Right ventricle myocardium inferior (tissue), 1 donor: ENCODE measurements at regions of chr19 and their contacts with region 1.

Region 1: DNA sequence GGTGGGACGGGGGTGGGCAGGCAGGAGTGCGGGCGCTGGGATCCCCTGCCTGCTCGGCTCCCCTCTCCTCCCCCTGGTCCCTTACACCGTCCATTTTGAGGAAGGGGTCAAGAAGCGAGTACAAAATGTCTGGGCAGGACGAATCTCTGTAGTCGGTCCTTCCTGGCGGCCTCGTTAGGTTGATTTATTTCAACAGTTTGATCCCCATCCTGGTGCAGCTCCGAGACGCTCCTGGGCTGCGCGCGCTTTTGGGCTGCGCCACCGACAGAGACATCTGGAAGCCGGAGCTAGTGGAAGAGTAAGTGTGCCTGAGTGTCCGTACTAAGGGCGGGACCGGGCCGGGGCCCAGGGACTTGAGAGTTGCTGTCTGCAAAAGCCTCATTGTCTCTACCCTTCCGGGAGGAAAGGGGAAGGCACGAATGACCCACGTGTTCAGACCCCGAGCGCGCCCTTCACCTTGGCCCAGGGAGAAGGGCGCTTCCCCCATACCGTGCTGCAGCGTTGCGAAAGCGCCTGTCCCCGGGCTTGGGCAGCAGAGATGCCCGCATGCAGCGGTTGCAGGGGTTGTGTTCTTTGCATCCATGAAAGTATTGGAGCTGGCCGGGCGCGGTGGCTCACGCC is 1.8 kb downstream of the ZNF114 start:
- DNase-seq: peak; percentile 76
- ATAC-seq: peak; percentile 79

Region 2: DNA sequence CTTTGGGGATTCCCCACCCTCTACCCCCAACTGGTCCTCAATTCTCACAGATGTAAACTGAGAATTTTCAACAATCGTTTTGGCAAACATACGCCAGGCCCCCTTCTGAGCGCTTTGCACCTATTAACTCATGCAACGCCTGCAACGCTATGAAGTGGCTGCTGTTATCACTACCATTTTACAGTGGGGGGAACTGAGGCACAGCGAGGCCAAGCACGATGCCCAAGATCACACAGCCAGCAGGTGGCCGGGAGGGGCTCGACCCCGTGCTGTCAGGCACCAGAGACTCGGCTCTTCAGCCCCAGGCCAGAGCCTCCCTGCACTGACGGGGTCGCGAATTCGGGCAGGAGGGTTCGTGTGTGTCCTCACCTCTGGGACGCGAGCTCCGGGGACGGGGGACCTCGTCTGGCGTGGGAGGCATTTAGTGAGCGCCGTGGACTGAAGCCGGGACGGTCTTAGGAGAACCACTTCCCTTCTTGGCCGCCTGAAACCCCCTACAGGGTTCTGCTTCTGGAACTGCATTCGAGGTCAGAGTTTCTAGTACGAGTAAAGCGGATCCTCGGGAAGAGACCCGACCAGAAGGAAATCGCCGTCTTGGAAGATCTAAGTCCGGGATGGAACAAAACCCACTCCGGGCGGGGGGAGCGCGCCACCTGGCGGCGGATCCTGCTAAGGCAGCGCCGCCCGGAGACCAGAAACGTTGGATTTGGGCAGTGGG is 19.3 kb after region 1 on chr19:
- intact Hi-C with region 1: loop called (anchors 1 kb)
- DNase-seq: peak; percentile 93
- ATAC-seq: peak; percentile 80

Region 3: GRCh38 chr19:48333467-48334384 is 62.1 kb after region 1 on chr19:
- intact Hi-C with region 1: loop called (anchors 5 kb)
- DNase-seq: peak; percentile 96
- ATAC-seq: peak; percentile 85

Region 4: GRCh38 chr19:48424694-48425219 is 153.1 kb after region 1 on chr19:
- intact Hi-C with region 1: no loop called
- DNase-seq: no peak
- ATAC-seq: no peak

Region 5: DNA sequence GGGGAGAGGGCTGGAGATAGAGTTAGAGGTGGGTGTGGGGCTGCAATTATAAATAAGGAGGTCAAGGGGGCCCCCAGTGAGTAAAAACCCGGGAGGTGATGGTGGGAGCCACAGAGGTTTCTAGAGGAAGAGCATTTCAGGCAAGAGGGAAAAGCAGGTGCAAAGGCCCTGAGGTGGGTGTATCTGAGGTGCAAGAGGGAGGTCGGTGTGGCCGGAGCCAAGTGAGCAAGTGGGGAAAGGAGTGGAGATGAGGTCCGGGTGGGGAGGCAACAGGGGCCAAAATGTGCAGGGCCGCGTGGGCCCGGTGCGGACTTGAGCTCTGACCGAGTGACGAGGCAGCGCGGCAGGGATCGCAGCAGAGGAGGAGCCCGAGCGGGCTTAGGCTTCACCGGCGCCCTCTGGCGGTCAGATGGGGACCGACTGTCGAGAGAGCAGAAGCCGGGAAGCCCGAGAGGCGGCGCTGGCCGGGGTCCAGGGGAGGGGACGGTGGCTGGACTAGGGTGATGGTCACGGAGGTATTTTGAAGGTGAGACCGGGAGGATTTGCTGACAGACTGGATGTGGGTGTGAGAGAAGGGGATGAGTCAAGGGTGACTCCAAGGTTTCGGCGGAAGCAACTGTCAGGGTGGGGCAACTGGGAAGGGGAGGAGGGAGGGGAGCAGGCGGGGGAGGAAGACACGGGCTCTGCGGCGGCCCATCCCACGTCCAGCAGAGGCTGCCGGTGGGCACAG is 317.2 kb after region 1 on chr19:
- intact Hi-C with region 1: loop called (anchors 2 kb)
- DNase-seq: peak; percentile 96
- ATAC-seq: peak; percentile 83